Common myeloid progenitor, CD34-positive (primary cell): ENCODE measurements at regions of chr17 and their contacts with region 1.

Region 1: GRCh38 chr17:8041249-8041928 is 2.5 kb downstream of the ALOX15B start:
- DNase-seq: peak; percentile 76 to 88 (median 84)
- H3K4me3 ChIP-seq: no peak overlapping the region
- H3K27ac ChIP-seq: no peak overlapping the region
- H3K4me1 ChIP-seq: peaks cover 0 to 27% (median 23%) of the 10 kb centered on the region in 4 experiments
- H3K27me3 ChIP-seq: no peaks in the 10 kb centered on the region

Region 2: GRCh38 chr17:7931709-7932482 is 109.5 kb before region 1 on chr17 and contains the starts of genes CNTROB and TRAPPC1:
- CTCF ChIA-PET with region 1: interaction called, 22 read pairs
- POLR2A ChIA-PET with region 1: no interaction called
- DNase-seq: peak; percentile 99 to 100 (median 99)
- H3K4me3 ChIP-seq: peak within 1 kb of the TSS; percentile 50 to 98 (median 88)
- H3K27ac ChIP-seq: peak within 1 kb of the TSS; percentile 92 to 97
- H3K4me1 ChIP-seq: peaks cover 7 to 37% (median 24%) of the 10 kb centered on the region in 4 experiments
- H3K27me3 ChIP-seq: no peaks in the 10 kb centered on the region

Region 3: GRCh38 chr17:7997186-7997585 is 44.2 kb before region 1 on chr17:
- CTCF ChIA-PET with region 1: interaction called, 13 read pairs
- POLR2A ChIA-PET with region 1: interaction called, 4 read pairs
- DNase-seq: peak; percentile 57 to 83 (median 81)
- H3K4me3 ChIP-seq: peak overlapping the region in 1 of 7 experiments; percentile 30
- H3K27ac ChIP-seq: no peak overlapping the region
- H3K4me1 ChIP-seq: peaks cover 4 to 20% (median 15%) of the 10 kb centered on the region in 4 experiments
- H3K27me3 ChIP-seq: no peaks in the 10 kb centered on the region

Region 4: GRCh38 chr17:8029135-8029534 is 12.3 kb before region 1 on chr17:
- CTCF ChIA-PET with region 1: interaction called, 23 read pairs
- POLR2A ChIA-PET with region 1: no interaction called
- DNase-seq: no peak
- H3K4me3 ChIP-seq: no peak overlapping the region
- H3K27ac ChIP-seq: no peak overlapping the region
- H3K4me1 ChIP-seq: no peaks in the 10 kb centered on the region
- H3K27me3 ChIP-seq: peaks cover 0 to 5% (median 0%) of the 10 kb centered on the region in 5 experiments